Right cardiac atrium (tissue), 5 donors: ENCODE measurements at regions of chr17 and their contacts with region 1.

Region 1: GRCh38 chr17:45948881-45949624 is 50.0 kb upstream of the STH start:
- DNase-seq: peak; percentile 84 to 93 (median 92)
- ATAC-seq: peak; percentile 92
- H3K4me3 ChIP-seq: peak overlapping the region; percentile 41
- H3K27ac ChIP-seq: no peak overlapping the region
- H3K4me1 ChIP-seq: peaks cover 2% of the 10 kb centered on the region
- H3K27me3 ChIP-seq: no peaks in the 10 kb centered on the region

Region 2: DNA sequence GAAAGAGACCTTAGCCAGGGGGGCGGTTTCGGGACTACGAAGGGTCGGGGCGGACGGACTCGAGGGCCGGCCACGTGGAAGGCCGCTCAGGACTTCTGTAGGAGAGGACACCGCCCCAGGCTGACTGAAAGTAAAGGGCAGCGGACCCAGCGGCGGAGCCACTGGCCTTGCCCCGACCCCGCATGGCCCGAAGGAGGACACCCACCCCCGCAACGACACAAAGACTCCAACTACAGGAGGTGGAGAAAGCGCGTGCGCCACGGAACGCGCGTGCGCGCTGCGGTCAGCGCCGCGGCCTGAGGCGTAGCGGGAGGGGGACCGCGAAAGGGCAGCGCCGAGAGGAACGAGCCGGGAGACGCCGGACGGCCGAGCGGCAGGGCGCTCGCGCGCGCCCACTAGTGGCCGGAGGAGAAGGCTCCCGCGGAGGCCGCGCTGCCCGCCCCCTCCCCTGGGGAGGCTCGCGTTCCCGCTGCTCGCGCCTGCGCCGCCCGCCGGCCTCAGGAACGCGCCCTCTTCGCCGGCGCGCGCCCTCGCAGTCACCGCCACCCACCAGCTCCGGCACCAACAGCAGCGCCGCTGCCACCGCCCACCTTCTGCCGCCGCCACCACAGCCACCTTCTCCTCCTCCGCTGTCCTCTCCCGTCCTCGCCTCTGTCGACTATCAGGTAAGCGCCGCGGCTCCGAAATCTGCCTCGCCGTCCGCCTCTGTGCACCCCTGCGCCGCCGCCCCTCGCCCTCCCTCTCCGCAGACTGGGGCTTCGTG is 54.9 kb before region 1 on chr17 and contains the start of gene MAPT:
- intact Hi-C with region 1: loop called in 1 of 4 experiments (anchors 10 kb)
- DNase-seq: peak; percentile 92 to 97 (median 96)
- ATAC-seq: peak; percentile 97 to 98
- H3K4me3 ChIP-seq: peak within 1 kb of the TSS; percentile 52
- H3K27ac ChIP-seq: peak within 1 kb of the TSS; percentile 53
- H3K4me1 ChIP-seq: no peaks in the 10 kb centered on the region
- H3K27me3 ChIP-seq: no peaks in the 10 kb centered on the region
- total RNA-seq, gene MAPT: 6.9 to 15.1 (median 10.8) TPM

Region 3: GRCh38 chr17:46072998-46073397 is 123.9 kb after region 1 on chr17:
- intact Hi-C with region 1: no loop called
- DNase-seq: no peak
- ATAC-seq: no peak
- H3K4me3 ChIP-seq: no peak overlapping the region
- H3K27ac ChIP-seq: no peak overlapping the region
- H3K4me1 ChIP-seq: no peaks in the 10 kb centered on the region
- H3K27me3 ChIP-seq: no peaks in the 10 kb centered on the region